ENCODE measurements at regions of chr14 and their contacts with region 1.

Region 1: DNA sequence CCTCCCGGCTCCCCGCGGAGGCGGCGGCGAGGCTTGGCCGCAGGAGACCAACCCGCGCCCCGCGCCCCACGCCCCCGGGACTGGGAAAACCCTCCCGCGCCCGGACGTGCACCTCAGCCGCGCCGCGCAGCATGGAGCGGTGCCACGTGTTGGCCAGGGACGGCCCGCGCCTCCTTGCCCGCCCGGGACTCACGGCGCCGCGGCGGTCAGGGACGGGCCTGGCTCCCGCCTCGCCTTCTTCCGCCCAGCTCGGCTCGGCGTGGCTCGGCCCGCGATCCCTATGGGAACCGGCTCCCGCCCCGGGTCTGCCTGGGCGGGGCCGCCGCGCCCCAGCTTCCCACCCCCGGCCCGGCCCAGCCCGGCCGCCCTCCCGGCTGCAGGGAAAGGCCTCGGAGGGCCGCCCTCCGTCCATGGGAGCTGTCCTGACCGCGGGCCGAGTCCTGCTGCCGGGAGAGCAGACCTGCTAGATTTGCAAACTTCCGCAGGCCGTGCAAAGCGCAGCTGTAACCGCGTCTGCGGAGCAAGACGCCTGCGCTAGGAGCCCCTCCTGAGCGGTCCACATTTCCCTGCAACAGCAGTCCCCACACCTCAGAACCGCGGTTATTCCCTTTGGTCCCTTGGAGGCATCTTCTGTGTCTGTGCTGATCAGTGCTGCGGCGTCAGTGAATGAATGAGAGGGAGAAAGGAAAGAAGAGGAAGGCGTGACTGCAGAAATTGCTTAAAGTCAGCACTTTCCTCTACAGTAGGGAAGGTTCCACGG is at the start of gene CDKL1:
- DNase-seq: peak; percentile 70
- ATAC-seq: peak; percentile 75
- H3K4me3 Mint-ChIP-seq: peak within 1 kb of the TSS; percentile 82
- H3K27ac Mint-ChIP-seq: peak within 1 kb of the TSS; percentile 72
- H3K4me1 Mint-ChIP-seq: peaks cover 14% of the 10 kb centered on the region
- H3K27me3 Mint-ChIP-seq: peaks cover 6% of the 10 kb centered on the region
- total RNA-seq, gene CDKL1: 2.9 to 4.4 TPM

Region 2: GRCh38 chr14:50363714-50364111 is 33.1 kb before region 1 on chr14:
- CTCF ChIA-PET with region 1: no interaction called
- POLR2A ChIA-PET with region 1: interaction called, 4 read pairs
- intact Hi-C with region 1: loop called in 1 of 2 experiments (anchors 2 kb)
- DNase-seq: peak; percentile 66
- ATAC-seq: peak; percentile 96
- H3K4me3 Mint-ChIP-seq: peak overlapping the region; percentile 82
- H3K27ac Mint-ChIP-seq: peak overlapping the region; percentile 94
- H3K4me1 Mint-ChIP-seq: peaks cover 20% of the 10 kb centered on the region
- H3K27me3 Mint-ChIP-seq: no peaks in the 10 kb centered on the region

Measured in activated CD4-positive, alpha-beta T cell treated with anti-CD3 and anti-CD28 coated beads for 36 hours (primary cell).